Common myeloid progenitor, CD34-positive (primary cell): ENCODE measurements at regions of chr11 and their contacts with region 1.

Region 1: DNA sequence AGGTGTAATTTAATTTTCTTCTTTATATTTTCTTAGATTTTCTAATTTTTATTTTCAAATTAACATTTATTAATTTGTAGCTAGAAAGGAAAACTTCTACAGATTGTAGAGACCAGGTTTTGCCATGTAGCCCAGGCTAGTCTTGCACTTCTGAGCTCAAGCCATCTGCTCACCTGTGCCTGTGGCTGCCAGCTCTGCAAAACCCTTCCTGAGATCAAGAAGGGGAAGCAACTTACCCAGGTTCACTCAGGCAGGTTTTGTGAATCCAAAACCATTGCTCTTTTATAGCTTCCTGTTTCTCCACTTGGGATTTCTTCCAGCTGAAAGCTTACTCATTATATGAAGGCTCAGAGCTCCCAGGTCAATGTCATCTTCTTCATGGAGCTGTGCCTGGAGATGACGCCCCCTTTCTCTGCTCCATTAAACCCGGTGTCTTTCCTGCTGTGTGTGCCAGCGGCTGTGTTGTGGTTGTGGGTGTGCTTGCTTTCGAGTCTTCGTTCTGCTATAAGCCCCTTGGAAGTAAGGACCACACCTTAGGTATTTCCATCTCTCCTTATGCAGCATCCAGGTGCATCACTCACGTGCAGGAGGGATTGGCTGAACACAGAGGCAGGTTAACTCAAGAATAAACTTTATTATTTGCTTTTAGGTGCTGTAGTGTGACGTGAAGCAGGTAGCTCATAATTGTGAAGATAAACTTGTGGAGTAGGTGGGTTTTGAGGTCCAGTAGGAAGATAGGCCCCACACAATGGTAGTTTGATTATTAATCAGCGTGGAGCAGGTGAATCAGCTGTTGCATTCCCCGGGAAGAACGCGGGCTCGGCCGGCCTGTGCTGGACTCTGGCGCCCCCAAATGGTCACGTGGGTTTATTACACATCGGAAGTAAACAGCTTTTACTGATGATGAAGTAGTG is 42.2 kb upstream of the INCENP start:
- DNase-seq: peak; percentile 67 to 75 (median 73)
- H3K4me3 ChIP-seq: peak overlapping the region in 3 of 7 experiments; percentile 41 to 70 (median 43)
- H3K27ac ChIP-seq: no peak overlapping the region
- H3K4me1 ChIP-seq: peaks cover 0 to 7% (median 5%) of the 10 kb centered on the region in 4 experiments
- H3K27me3 ChIP-seq: no peaks in the 10 kb centered on the region

Region 2: DNA sequence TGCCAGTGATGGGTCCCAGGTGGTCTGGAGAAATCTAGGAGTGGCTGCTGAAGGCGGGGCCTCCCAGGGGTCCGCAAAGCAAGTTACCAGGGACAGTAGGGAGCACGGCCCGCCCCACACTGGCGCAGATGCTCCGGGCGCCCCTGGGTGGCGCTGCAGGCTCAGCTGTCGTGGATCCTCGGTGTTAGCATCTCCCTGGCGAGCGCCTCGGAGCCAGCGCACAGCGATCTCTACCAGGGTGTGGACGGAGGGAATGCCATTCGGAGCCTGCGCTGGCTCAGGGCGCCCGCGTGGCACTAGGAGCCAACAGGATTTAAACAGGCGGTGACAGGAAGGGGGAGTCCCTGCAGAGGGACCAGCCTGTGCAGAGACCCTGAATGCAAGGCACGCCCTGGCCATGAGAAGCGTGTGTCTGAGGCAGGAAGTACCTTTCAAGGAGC is 210.5 kb before region 1 on chr11:
- CTCF ChIA-PET with region 1: interaction called, 15 read pairs
- POLR2A ChIA-PET with region 1: no interaction called
- DNase-seq: peak; percentile 65 to 76 (median 76)
- H3K4me3 ChIP-seq: peak overlapping the region in 4 of 7 experiments; percentile 26 to 72 (median 47)
- H3K27ac ChIP-seq: no peak overlapping the region
- H3K4me1 ChIP-seq: peaks cover 0 to 14% (median 6%) of the 10 kb centered on the region in 4 experiments
- H3K27me3 ChIP-seq: peaks cover 0 to 2% (median 0%) of the 10 kb centered on the region in 5 experiments

Region 3: DNA sequence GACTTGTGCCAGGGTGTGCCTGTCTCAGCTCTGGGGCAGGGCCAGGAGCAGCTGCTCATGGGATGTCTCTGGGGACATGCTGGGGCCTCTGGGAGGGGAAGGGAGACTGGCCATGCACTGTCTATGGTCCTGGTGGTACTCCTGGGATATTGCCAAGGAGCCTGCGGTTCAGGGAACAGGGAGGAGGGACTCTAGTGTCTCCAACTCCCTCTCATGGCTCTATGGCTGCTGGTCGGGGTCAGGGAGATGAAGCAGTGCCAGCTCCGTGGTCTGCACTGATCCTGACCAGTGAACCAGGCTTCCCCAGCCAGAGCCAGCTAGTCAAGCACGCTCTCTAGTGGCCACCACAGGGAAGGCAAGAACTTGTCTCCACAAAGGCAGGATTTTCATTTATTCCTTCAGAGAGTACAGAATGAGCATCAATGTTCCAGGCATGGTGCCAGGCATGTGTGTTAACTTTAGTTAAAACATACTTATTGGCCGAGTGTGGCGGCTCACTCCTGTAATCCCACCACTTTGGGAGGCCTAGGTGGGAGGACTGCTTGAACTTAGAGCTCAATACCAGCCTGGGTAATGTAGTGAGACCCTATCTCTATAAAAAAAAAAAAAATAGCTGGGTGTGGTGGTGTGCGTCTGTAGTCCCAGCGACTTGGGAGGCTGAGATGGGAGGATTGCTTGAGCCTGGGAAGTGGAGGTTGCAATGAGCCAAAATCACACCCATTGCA is 134.0 kb before region 1 on chr11:
- CTCF ChIA-PET with region 1: interaction called, 115 read pairs
- POLR2A ChIA-PET with region 1: interaction called, 3 read pairs
- DNase-seq: peak; percentile 77 to 85 (median 78)
- H3K4me3 ChIP-seq: no peak overlapping the region
- H3K27ac ChIP-seq: no peak overlapping the region
- H3K4me1 ChIP-seq: peaks cover 0 to 5% (median 1%) of the 10 kb centered on the region in 4 experiments
- H3K27me3 ChIP-seq: no peaks in the 10 kb centered on the region

Region 4: GRCh38 chr11:61967116-61967923 is 114.3 kb before region 1 on chr11 and contains the start of gene FTH1:
- CTCF ChIA-PET with region 1: interaction called, 45 read pairs
- POLR2A ChIA-PET with region 1: interaction called, 18 read pairs
- DNase-seq: peak; percentile 90 to 95 (median 95)
- H3K4me3 ChIP-seq: peak within 1 kb of the TSS; percentile 64 to 100 (median 97)
- H3K27ac ChIP-seq: peak within 1 kb of the TSS; percentile 86 to 93
- H3K4me1 ChIP-seq: peaks cover 45 to 89% (median 78%) of the 10 kb centered on the region in 4 experiments
- H3K27me3 ChIP-seq: no peaks in the 10 kb centered on the region

Region 5: DNA sequence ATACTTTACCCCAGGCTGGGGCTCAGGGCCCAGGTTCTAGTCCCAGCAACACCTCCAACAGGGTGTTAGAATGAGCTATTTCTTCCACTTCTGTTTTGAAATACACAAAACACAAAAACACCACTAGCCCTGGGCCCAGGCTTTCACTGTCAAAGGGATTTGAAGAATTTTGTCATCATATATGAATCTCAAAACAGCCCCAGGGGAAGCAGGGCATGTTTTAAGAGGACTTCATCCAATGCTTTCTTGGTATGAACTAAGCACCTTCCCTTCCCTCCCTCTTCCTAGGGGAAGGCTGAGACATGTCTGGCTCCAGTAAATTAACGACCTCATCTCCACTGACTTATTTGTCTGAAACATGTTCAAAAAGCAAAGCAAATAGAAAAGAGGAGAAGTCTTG is 33.6 kb before region 1 on chr11:
- CTCF ChIA-PET with region 1: interaction called, 14 read pairs
- POLR2A ChIA-PET with region 1: interaction called, 4 read pairs
- DNase-seq: no peak
- H3K4me3 ChIP-seq: no peak overlapping the region
- H3K27ac ChIP-seq: no peak overlapping the region
- H3K4me1 ChIP-seq: peaks cover 0 to 7% (median 1%) of the 10 kb centered on the region in 4 experiments
- H3K27me3 ChIP-seq: no peaks in the 10 kb centered on the region

Region 6: GRCh38 chr11:62108017-62108750 is 26.5 kb after region 1 on chr11:
- CTCF ChIA-PET with region 1: interaction called, 34 read pairs
- POLR2A ChIA-PET with region 1: interaction called, 3 read pairs
- DNase-seq: peak; percentile 72 to 86 (median 78)
- H3K4me3 ChIP-seq: no peak overlapping the region
- H3K27ac ChIP-seq: no peak overlapping the region
- H3K4me1 ChIP-seq: peaks cover 0 to 21% (median 12%) of the 10 kb centered on the region in 4 experiments
- H3K27me3 ChIP-seq: peaks cover 0 to 4% (median 0%) of the 10 kb centered on the region in 5 experiments